B cell (primary cell): ENCODE measurements at regions of chr1 and their contacts with region 1.

Region 1: GRCh38 chr1:1906185-1907097 is 8.6 kb upstream of the CALML6 start:
- DNase-seq: peak; percentile 80
- ATAC-seq: peak; percentile 21
- H3K4me3 ChIP-seq: no peak overlapping the region
- H3K4me3 Mint-ChIP-seq: peak overlapping the region; percentile 66
- H3K27ac ChIP-seq: peak overlapping the region in 1 of 2 donors; percentile 30
- H3K27ac Mint-ChIP-seq: peak overlapping the region; percentile 75
- H3K4me1 ChIP-seq: peaks cover 28 to 42% of the 10 kb centered on the region in 2 donors
- H3K4me1 Mint-ChIP-seq: peaks cover 33% of the 10 kb centered on the region
- H3K27me3 ChIP-seq: no peaks in the 10 kb centered on the region
- H3K27me3 Mint-ChIP-seq: no peaks in the 10 kb centered on the region
- CTCF ChIP-seq: peak; percentile 96

Region 2: DNA sequence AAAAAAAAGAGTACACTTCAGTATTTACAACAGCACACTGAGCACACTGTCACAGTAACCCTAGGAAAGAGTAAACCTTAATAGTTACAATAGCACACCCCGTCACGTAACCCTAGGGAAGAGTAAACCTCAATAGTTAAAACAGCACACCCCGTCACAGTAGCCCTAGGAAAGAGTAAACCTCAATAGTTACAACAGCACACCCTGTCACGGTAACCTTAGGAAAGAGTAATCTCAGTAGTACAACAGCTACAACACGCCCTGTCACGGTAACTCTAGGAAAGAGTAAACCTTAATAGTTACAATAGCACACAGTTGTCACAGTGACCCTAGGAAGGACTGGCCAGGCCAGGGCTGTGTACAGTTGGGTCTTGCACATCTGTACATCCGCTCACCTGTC is 185.2 kb before region 1 on chr1:
- CTCF ChIA-PET with region 1: no interaction called
- POLR2A ChIA-PET with region 1: no interaction called
- intact Hi-C with region 1: no loop called
- DNase-seq: no peak
- ATAC-seq: no peak
- H3K4me3 ChIP-seq: no peak overlapping the region
- H3K4me3 Mint-ChIP-seq: no peak overlapping the region
- H3K27ac ChIP-seq: no peak overlapping the region
- H3K27ac Mint-ChIP-seq: no peak overlapping the region
- H3K4me1 ChIP-seq: no peaks in the 10 kb centered on the region
- H3K4me1 Mint-ChIP-seq: peaks cover 2% of the 10 kb centered on the region
- H3K27me3 ChIP-seq: no peaks in the 10 kb centered on the region
- H3K27me3 Mint-ChIP-seq: no peaks in the 10 kb centered on the region
- CTCF ChIP-seq: no peak

Region 3: GRCh38 chr1:1777950-1778662 is 128.3 kb before region 1 on chr1 and contains the start of gene NADK:
- CTCF ChIA-PET with region 1: interaction called, 66 read pairs
- POLR2A ChIA-PET with region 1: interaction called, 24 read pairs
- intact Hi-C with region 1: loop called (anchors 1 kb)
- DNase-seq: peak; percentile 88
- ATAC-seq: peak; percentile 26
- H3K4me3 ChIP-seq: peak within 1 kb of the TSS; percentile 61 to 78 (median 70)
- H3K4me3 Mint-ChIP-seq: peak within 1 kb of the TSS; percentile 92
- H3K27ac ChIP-seq: peak within 1 kb of the TSS; percentile 93 to 94
- H3K27ac Mint-ChIP-seq: peak within 1 kb of the TSS; percentile 99
- H3K4me1 ChIP-seq: peaks cover 71 to 81% of the 10 kb centered on the region in 2 donors
- H3K4me1 Mint-ChIP-seq: peaks cover 67% of the 10 kb centered on the region
- H3K27me3 ChIP-seq: no peaks in the 10 kb centered on the region
- H3K27me3 Mint-ChIP-seq: no peaks in the 10 kb centered on the region
- CTCF ChIP-seq: no peak
- total RNA-seq, gene NADK: 179 and 184 TPM in 2 replicates

Region 4: GRCh38 chr1:1841575-1841995 is 64.9 kb before region 1 on chr1:
- CTCF ChIA-PET with region 1: interaction called, 3 read pairs
- POLR2A ChIA-PET with region 1: interaction called, 11 read pairs
- intact Hi-C with region 1: loop called (anchors 5 kb)
- DNase-seq: no peak
- ATAC-seq: no peak
- H3K4me3 ChIP-seq: peak overlapping the region in 1 of 5 experiments; percentile 8
- H3K4me3 Mint-ChIP-seq: peak overlapping the region; percentile 88
- H3K27ac ChIP-seq: peak overlapping the region in 1 of 2 donors; percentile 64
- H3K27ac Mint-ChIP-seq: peak overlapping the region; percentile 87
- H3K4me1 ChIP-seq: peaks cover 43 to 50% of the 10 kb centered on the region in 2 donors
- H3K4me1 Mint-ChIP-seq: peaks cover 61% of the 10 kb centered on the region
- H3K27me3 ChIP-seq: no peaks in the 10 kb centered on the region
- H3K27me3 Mint-ChIP-seq: no peaks in the 10 kb centered on the region
- CTCF ChIP-seq: no peak

Region 5: DNA sequence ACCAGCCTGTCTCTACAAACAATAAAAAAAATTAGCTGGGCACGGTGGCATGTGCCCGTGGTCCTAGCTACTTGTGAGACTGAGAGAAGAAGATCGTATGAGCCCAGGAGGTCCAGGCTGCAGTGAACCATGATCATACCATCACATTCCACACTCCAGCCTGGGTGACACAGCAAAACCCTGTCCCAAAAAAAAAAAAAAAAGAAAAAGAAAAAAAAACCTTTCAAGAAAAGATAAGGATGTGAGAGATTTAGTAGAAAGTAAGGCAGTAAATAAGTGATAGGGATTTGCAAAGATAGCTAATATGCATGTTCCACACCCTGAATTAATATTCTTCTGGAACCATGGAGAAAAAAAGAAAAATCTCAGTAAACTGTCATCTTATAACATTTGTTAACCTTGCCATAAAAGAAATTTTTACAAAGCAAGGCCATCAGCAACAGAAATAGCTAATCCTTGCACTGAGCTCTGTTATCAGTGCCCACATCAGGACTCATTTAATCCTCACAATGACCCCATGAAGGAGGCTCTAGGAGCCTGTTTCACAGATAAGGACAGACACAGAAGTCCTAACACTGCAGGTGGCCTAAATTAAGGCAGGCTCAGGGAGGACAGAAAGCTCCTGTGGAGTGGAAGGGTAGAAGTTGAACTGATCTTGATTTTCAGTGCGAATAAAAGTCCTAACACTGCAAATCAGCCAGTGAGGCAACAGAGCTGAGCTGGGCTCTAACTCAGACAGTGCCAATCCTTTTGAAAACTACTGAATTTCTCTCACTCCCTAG is 23.2 kb before region 1 on chr1:
- CTCF ChIA-PET with region 1: interaction called, 14 read pairs
- POLR2A ChIA-PET with region 1: no interaction called
- intact Hi-C with region 1: no loop called
- DNase-seq: no peak
- ATAC-seq: no peak
- H3K4me3 ChIP-seq: no peak overlapping the region
- H3K4me3 Mint-ChIP-seq: peak overlapping the region; percentile 16
- H3K27ac ChIP-seq: no peak overlapping the region
- H3K27ac Mint-ChIP-seq: no peak overlapping the region
- H3K4me1 ChIP-seq: peaks cover 51 to 60% of the 10 kb centered on the region in 2 donors
- H3K4me1 Mint-ChIP-seq: peaks cover 67% of the 10 kb centered on the region
- H3K27me3 ChIP-seq: no peaks in the 10 kb centered on the region
- H3K27me3 Mint-ChIP-seq: no peaks in the 10 kb centered on the region
- CTCF ChIP-seq: no peak

Region 6: DNA sequence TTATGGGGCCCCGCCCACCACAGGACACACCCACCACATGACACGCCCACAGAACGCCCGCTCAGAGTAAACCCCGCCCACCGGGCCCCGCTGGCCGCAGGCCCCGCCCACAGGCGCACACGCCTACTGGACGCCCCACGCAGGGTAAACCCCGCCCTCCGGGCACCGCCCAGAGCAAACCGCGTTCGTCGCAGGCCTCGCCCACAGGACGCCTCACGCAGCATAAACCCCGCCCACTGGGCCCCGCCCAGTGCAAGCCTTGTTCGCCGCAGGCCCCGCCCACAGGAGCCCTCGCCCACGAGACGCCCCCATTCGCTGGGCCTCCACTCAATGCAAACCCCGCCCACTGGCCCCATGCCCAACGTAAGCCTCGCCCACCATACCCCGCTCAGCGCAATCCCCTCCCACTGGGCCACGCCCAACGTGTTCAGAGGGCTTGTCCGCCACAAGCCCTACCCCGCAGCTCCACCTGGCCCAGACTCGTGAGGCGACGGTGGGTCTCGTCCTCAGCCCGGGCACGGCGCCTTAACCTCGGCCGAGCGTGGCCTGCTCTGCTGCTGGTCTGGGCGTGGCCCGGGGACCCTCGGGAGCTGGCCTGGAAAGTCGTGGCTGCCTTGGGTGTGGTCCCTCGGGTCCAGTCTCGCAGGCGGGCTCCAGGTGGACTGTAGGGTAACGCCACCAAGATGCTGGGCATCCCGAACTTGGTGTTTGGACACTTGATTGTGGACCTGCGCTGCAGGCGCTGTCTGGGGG is 13.0 kb after region 1 on chr1:
- CTCF ChIA-PET with region 1: interaction called, 6 read pairs
- POLR2A ChIA-PET with region 1: interaction called, 3 read pairs
- intact Hi-C with region 1: loop called (anchors 1 kb)
- DNase-seq: peak; percentile 100
- ATAC-seq: peak; percentile 88
- H3K4me3 ChIP-seq: peak overlapping the region in 4 of 5 experiments; percentile 37 to 67 (median 60)
- H3K4me3 Mint-ChIP-seq: peak overlapping the region; percentile 79
- H3K27ac ChIP-seq: peak overlapping the region in 1 of 2 donors; percentile 51
- H3K27ac Mint-ChIP-seq: peak overlapping the region; percentile 62
- H3K4me1 ChIP-seq: peaks cover 12 to 22% of the 10 kb centered on the region in 2 donors
- H3K4me1 Mint-ChIP-seq: peaks cover 4% of the 10 kb centered on the region
- H3K27me3 ChIP-seq: peaks cover 0 to 18% (median 0%) of the 10 kb centered on the region in 4 experiments
- H3K27me3 Mint-ChIP-seq: peaks cover under 1% of the 10 kb centered on the region
- CTCF ChIP-seq: no peak

Region 7: GRCh38 chr1:1966071-1966740 is 59.8 kb after region 1 on chr1:
- CTCF ChIA-PET with region 1: no interaction called
- POLR2A ChIA-PET with region 1: no interaction called
- intact Hi-C with region 1: no loop called
- DNase-seq: no peak
- ATAC-seq: no peak
- H3K4me3 ChIP-seq: no peak overlapping the region
- H3K4me3 Mint-ChIP-seq: no peak overlapping the region
- H3K27ac ChIP-seq: no peak overlapping the region
- H3K27ac Mint-ChIP-seq: no peak overlapping the region
- H3K4me1 ChIP-seq: no peaks in the 10 kb centered on the region
- H3K4me1 Mint-ChIP-seq: no peaks in the 10 kb centered on the region
- H3K27me3 ChIP-seq: peaks cover 0 to 4% (median 0%) of the 10 kb centered on the region in 4 experiments
- H3K27me3 Mint-ChIP-seq: peaks cover 12% of the 10 kb centered on the region
- CTCF ChIP-seq: no peak

Region 8: DNA sequence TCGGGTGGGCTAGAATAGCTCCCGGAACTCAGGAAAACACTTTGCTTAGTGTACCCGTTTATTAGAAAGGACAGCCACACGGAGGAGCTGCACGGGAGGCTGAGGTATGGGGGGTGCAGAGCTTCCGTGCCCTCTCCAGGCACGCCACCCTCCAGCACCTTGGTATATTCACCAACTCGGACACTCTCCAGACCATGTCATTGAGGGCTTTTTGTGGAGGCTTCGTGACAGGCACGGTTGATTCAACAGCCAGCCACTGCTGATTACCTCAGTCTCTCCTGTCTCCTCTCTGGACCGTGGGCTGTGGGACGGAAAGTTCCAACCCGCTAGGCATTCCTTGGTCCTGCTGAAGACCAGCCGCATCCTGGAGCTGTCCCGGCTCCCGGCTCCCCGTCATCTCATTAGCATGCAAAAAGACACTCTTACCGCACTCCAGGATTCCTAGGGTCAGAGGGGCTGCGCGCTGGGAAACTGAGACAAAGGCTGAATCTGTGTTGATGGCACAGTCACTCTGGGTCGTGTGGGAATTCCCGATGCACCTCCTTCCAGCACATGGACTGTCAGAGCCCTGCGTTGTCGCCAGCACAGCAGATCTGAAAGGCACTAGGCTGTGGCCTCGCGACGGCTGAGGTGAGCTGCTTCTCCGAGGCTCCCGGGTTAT is 209.4 kb after region 1 on chr1:
- CTCF ChIA-PET with region 1: no interaction called
- POLR2A ChIA-PET with region 1: interaction called, 12 read pairs
- intact Hi-C with region 1: no loop called
- DNase-seq: no peak
- ATAC-seq: no peak
- H3K4me3 ChIP-seq: no peak overlapping the region
- H3K4me3 Mint-ChIP-seq: no peak overlapping the region
- H3K27ac ChIP-seq: no peak overlapping the region
- H3K27ac Mint-ChIP-seq: peak overlapping the region; percentile 26
- H3K4me1 ChIP-seq: peaks cover 20 to 22% of the 10 kb centered on the region in 2 donors
- H3K4me1 Mint-ChIP-seq: peaks cover 37% of the 10 kb centered on the region
- H3K27me3 ChIP-seq: no peaks in the 10 kb centered on the region
- H3K27me3 Mint-ChIP-seq: no peaks in the 10 kb centered on the region
- CTCF ChIP-seq: no peak